ENCODE measurements at regions of chr3 and their contacts with region 1.

Region 1: GRCh38 chr3:60504827-60505457 is 746.3 kb downstream of the FHIT start:
- DNase-seq: no peak
- ATAC-seq: peak; percentile 71
- H3K4me3 Mint-ChIP-seq: peak overlapping the region; percentile 24
- H3K27ac Mint-ChIP-seq: peak overlapping the region; percentile 13
- H3K4me1 Mint-ChIP-seq: peaks cover 14% of the 10 kb centered on the region
- H3K27me3 Mint-ChIP-seq: no peaks in the 10 kb centered on the region
- CTCF ChIP-seq: no peak

Region 2: GRCh38 chr3:60585918-60586317 is 81.0 kb after region 1 on chr3:
- CTCF ChIA-PET with region 1: no interaction called
- POLR2A ChIA-PET with region 1: no interaction called
- intact Hi-C with region 1: loop called (anchors 2 kb)
- DNase-seq: no peak
- ATAC-seq: peak; percentile 78
- H3K4me3 Mint-ChIP-seq: no peak overlapping the region
- H3K27ac Mint-ChIP-seq: peak overlapping the region; percentile 72
- H3K4me1 Mint-ChIP-seq: peaks cover 21% of the 10 kb centered on the region
- H3K27me3 Mint-ChIP-seq: no peaks in the 10 kb centered on the region
- CTCF ChIP-seq: no peak